Brain microvascular endothelial cell (primary cell): ENCODE measurements at regions of chr17 and their contacts with region 1.

Region 1: DNA sequence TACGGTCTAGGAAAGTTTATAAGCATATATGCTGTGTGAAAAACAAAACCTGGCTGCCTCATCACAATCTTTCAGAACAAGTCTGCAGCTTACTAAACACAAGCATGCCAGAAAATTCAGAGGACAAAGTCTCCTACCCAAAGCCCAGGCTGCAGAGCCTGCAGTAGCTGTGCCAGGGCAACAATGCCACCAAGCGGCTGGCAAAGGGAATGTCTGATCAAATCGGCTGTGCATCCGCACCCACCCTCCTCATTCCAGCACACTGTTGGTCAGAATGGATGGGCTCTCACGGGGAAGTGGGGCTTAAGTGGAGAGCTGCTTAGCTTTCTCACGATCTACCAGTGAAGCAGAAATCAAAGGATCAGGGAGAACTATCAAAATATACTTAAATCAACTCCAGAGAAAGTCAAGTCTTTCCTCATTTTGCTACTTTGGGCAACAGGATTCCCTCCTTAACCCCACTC is 73.5 kb downstream of the CYTH1 start:
- DNase-seq: peak; percentile 64
- H3K4me3 ChIP-seq: no peak overlapping the region
- H3K27ac ChIP-seq: no peak overlapping the region
- H3K27me3 ChIP-seq: no peaks in the 10 kb centered on the region
- CTCF ChIP-seq: peak; percentile 92

Region 2: GRCh38 chr17:78497115-78497540 is 211.4 kb before region 1 on chr17:
- in situ Hi-C with region 1: loop called (anchors 25 kb)
- DNase-seq: peak; percentile 73
- H3K4me3 ChIP-seq: no peak overlapping the region
- H3K27ac ChIP-seq: no peak overlapping the region
- H3K27me3 ChIP-seq: no peaks in the 10 kb centered on the region
- CTCF ChIP-seq: peak; percentile 90

Region 3: GRCh38 chr17:78517421-78517820 is 191.1 kb before region 1 on chr17:
- in situ Hi-C with region 1: no loop called
- DNase-seq: no peak
- H3K4me3 ChIP-seq: no peak overlapping the region
- H3K27ac ChIP-seq: no peak overlapping the region
- H3K27me3 ChIP-seq: no peaks in the 10 kb centered on the region
- CTCF ChIP-seq: no peak

Region 4: DNA sequence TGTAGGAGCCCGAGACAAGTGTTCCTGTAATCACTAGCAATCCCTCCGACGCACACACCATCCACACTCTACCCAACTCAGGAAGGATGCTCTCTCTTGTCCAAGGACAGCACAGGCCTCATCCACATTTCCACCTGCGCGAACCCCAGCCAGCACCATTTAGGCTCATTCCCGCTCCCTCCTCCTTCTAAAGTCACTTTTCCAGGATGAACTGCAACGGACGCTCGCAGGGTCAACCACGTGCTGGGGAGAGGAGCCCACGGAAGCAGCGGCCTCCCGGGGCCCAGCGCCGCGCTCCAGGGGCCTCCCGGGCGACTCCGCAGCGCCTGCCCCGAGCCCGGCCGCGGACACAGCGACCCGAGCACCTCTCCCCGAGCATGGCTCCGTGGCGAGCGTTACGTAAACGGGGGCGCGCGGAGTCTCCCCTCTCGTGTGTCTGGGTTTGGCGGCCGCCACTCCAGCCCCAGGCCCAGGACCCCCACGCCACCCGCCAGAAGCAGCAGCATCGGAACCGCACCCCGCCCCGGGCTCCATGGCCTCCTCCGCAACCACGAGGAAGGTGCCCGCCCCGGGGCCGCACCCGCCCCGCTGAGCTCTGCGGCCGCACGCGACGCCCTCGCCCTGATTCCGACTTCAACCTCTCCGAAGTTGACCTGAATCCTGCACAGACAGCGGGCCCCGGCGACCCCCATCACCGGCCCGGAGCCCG is 131.4 kb after region 1 on chr17:
- in situ Hi-C with region 1: no loop called
- DNase-seq: peak; percentile 24
- H3K4me3 ChIP-seq: peak overlapping the region; percentile 91
- H3K27ac ChIP-seq: peak overlapping the region; percentile 92
- H3K27me3 ChIP-seq: no peaks in the 10 kb centered on the region
- CTCF ChIP-seq: no peak